ENCODE measurements at regions of chr17 and their contacts with region 1.

Region 1: DNA sequence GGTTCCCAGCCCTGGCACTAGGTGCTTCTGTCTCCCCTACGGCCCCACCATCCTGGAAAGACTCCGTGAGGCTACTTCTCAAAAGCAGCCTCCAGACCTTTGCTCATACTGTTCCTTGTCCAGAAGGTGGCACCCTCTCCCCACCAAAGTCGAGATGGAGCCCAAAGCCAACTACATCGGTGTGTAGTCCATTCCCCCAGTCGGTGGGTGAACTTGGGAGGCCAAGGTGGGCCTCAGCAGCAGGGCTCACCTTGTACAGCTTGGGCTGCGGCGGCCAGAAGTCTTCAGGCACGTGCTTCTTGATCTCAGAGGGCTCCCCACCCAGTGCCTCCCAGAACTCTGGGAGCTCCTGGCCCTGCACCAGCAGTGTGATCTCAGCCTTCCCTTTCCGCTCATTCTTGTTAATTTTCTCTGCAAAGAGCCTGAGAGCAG is 10.2 kb downstream of the FLII start:
- DNase-seq: peak; percentile 90
- H3K4me3 ChIP-seq: no peak overlapping the region; a peak in 1 of 4 replicates
- H3K27ac ChIP-seq: no peak overlapping the region
- H3K4me1 ChIP-seq: no peaks in the 10 kb centered on the region
- H3K27me3 ChIP-seq: no peaks in the 10 kb centered on the region
- CTCF ChIP-seq: peak; percentile 72
- EP300 ChIP-seq: no peak
- RAD21 ChIP-seq: peak; percentile 81

Region 2: DNA sequence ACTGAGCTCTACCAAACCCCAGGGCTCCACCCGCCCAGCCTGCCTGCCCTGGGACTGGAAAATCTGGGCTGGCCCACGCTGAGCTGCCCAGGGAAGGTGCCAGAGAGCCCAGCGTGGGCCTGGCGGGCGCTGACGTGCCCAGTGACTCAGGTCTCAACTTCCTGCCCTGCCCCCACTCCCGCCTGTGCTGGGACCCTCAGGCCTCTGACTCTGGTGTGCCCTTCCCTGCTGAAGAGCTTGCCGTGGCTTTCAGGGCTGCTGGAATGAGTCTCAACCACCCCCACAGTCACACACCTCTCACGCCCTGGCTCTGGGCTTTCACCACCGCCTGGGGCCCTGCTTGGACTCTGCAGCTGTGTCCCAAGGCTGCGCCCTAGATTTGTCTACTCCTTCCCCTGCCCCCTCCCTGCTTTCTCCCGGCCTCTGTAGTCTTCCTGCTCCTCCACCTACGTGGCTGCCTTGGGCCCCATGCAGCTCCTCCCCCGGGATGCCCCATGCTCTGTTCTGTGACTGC is 12.5 kb before region 1 on chr17:
- CTCF ChIA-PET with region 1: interaction called, 26 read pairs
- POLR2A ChIA-PET with region 1: no interaction called
- DNase-seq: no peak
- H3K4me3 ChIP-seq: no peak overlapping the region
- H3K27ac ChIP-seq: peak overlapping the region in 1 of 2 experiments; percentile 70; a peak in 2 of 4 replicates
- H3K4me1 ChIP-seq: peaks cover 0 to 6% of the 10 kb centered on the region in 2 experiments; a peak in 2 of 4 replicates
- H3K27me3 ChIP-seq: no peaks in the 10 kb centered on the region
- CTCF ChIP-seq: no peak
- EP300 ChIP-seq: no peak
- RAD21 ChIP-seq: no peak

Region 3: GRCh38 chr17:18260332-18261144 is 12.2 kb after region 1 on chr17 and contains the start of gene MIEF2:
- CTCF ChIA-PET with region 1: interaction called, 21 read pairs
- POLR2A ChIA-PET with region 1: no interaction called
- DNase-seq: peak; percentile 98
- H3K4me3 ChIP-seq: peak within 1 kb of the TSS; percentile 91 to 98
- H3K27ac ChIP-seq: peak within 1 kb of the TSS; percentile 87 to 91
- H3K4me1 ChIP-seq: peaks cover 8 to 35% of the 10 kb centered on the region in 2 experiments; a peak in 2 of 4 replicates
- H3K27me3 ChIP-seq: no peaks in the 10 kb centered on the region
- CTCF ChIP-seq: no peak
- EP300 ChIP-seq: no peak
- RAD21 ChIP-seq: no peak
- polyA plus RNA-seq, gene MIEF2: 12.7 and 16.8 TPM in 2 replicates